ENCODE measurements at regions of chr11 and their contacts with region 1.

Region 1: DNA sequence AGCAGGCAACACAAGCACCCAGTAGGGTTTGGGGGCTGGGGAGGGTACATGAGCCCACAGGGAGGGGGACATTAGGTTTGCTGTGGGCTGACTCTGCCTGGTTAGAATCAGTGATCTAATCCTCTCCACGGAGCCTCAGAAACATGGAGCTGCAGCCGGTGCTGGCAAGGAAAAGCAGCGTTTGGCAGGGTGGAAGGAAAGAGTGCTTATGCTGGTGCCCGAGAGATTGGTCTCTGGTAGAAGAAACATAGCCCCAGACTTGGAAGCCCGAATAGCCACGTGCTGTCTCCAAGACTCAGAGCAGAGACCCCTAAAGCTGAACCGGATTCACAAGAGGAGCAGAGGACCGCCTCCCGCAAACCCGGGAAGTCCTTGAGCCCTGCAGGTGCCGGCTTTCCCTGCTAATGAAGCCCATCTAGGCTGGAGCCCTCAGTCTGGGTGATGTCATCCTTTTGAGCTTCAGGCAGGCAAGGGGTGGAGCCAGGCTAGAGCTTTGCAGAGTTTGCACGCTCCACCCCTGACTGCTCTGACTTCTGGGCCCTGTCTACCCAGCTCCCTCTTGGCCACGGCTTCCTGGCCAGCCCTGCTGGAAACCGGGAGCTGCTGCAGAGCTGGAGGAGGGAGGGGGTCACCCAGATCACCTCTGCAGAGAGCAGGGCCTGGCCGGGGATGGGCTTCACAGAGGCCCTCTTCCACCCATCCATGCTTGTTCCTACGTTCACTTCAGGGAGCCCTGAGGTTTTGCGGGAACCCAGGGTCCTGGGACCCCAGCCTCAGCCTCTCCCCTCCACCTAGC is 35.0 kb upstream of the JAM3 start:
- DNase-seq: peak; percentile 84
- H3K4me3 Mint-ChIP-seq: peak overlapping the region; percentile 44
- H3K27ac Mint-ChIP-seq: peak overlapping the region; percentile 43
- H3K4me1 Mint-ChIP-seq: peaks cover 52% of the 10 kb centered on the region
- H3K27me3 Mint-ChIP-seq: no peaks in the 10 kb centered on the region

Region 2: GRCh38 chr11:133956650-133957633 is 77.0 kb before region 1 on chr11 and contains the start of gene IGSF9B:
- CTCF ChIA-PET with region 1: no interaction called
- intact Hi-C with region 1: loop called (anchors 1 kb)
- DNase-seq: peak; percentile 91
- H3K4me3 Mint-ChIP-seq: peak within 1 kb of the TSS; percentile 85
- H3K27ac Mint-ChIP-seq: peak within 1 kb of the TSS; percentile 86
- H3K4me1 Mint-ChIP-seq: peaks cover 45% of the 10 kb centered on the region
- H3K27me3 Mint-ChIP-seq: no peaks in the 10 kb centered on the region
- total RNA-seq, gene IGSF9B: 26.5 to 34.0 TPM

Region 3: GRCh38 chr11:133966921-133967598 is 66.8 kb before region 1 on chr11:
- CTCF ChIA-PET with region 1: interaction called, 3 read pairs
- intact Hi-C with region 1: loop called (anchors 2 kb)
- DNase-seq: peak; percentile 84
- H3K4me3 Mint-ChIP-seq: peak overlapping the region; percentile 81
- H3K27ac Mint-ChIP-seq: peak overlapping the region; percentile 73
- H3K4me1 Mint-ChIP-seq: peaks cover 9% of the 10 kb centered on the region
- H3K27me3 Mint-ChIP-seq: peaks cover 2% of the 10 kb centered on the region

Region 4: GRCh38 chr11:134068829-134069425 is 35.0 kb after region 1 on chr11 and contains the start of gene JAM3:
- CTCF ChIA-PET with region 1: no interaction called
- intact Hi-C with region 1: loop called (anchors 1 kb)
- DNase-seq: peak; percentile 94
- H3K4me3 Mint-ChIP-seq: peak within 1 kb of the TSS; percentile 94
- H3K27ac Mint-ChIP-seq: no peak within 1 kb of the TSS
- H3K4me1 Mint-ChIP-seq: peaks cover 11% of the 10 kb centered on the region
- H3K27me3 Mint-ChIP-seq: no peaks in the 10 kb centered on the region
- total RNA-seq, gene JAM3: 4.0 to 6.4 TPM